Naive thymus-derived CD4-positive, alpha-beta T cell (primary cell): ENCODE measurements at regions of chr3 and their contacts with region 1.

Region 1: DNA sequence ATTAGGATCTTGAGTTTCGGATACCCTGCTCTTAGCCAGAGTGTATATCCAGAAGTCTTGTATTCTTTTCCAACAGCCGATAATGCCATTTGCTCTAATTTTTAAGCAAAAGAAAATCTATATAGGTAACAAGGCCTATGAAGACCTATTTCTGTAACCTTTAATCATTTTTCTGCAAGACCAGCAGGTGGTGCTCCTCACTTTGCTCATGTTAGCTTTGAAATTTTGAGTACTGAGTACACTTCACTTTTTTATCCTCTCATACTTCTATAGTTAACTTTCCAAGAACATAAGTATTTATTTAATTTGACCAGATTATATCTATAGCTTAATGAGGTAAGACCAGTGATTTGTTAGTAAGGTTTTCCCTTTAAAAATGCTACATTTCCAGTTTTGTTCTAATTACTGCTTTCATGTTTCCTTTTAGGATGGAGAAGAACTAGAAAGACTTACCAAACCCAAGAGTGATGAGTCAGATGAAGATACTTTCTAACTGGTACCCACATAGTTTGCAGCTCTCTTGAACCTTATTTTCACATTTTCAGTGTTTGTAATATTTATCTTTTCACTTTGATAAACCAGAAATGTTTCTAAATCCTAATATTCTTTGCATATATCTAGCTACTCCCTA is 20.5 kb downstream of the SLC35A5 start:
- DNase-seq: peak in 5 of 9 donors; percentile 8 to 39 (median 22)
- ATAC-seq: peak; percentile 60
- H3K4me3 ChIP-seq: no peak overlapping the region
- H3K4me3 Mint-ChIP-seq: no peak overlapping the region
- H3K27ac ChIP-seq: no peak overlapping the region
- H3K27ac Mint-ChIP-seq: no peak overlapping the region
- H3K4me1 ChIP-seq: no peaks in the 10 kb centered on the region
- H3K4me1 Mint-ChIP-seq: peaks cover 0 to 4% (median under 1%) of the 10 kb centered on the region in 7 donors
- H3K27me3 ChIP-seq: no peaks in the 10 kb centered on the region
- H3K27me3 Mint-ChIP-seq: no peaks in the 10 kb centered on the region

Region 2: DNA sequence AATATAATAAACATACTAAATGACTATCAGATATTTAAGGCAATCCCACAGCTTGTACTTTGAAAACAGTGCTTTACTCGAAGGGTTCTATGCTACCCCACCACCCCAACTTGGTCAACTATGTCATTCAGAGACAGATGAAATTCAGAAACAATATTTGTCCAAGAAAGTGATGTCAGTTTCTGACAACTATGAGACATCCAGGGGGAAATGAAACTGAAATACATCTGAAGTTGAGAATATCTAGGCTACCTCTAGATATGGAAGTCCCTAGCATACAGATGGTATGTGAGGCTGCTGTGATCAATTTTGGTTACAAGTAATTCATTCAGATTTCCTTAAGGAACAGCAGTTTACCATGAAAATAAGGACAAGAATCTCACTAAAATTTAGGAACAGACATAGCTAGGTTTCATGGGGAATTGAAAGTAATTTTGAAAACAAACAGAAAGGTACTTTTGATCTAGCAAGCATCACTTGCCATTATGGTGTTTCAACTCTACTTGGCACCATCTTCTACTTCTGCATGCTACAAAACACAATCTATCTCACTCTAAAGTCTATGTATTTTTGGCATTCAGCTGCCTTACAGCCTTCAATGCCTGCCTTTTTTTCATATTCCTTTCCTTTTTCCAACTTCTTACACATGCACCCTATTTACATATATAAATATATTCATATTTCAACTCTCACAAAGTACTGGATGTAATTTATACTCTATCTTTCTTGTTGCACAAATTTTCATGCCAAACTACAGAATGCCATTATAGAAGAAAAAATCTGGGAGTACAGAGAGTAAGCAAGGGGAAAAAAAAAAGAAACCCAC is 42.3 kb before region 1 on chr3:
- CTCF ChIA-PET with region 1: no interaction called
- POLR2A ChIA-PET with region 1: no interaction called
- intact Hi-C with region 1: no loop called
- DNase-seq: no peak
- ATAC-seq: no peak
- H3K4me3 ChIP-seq: no peak overlapping the region
- H3K4me3 Mint-ChIP-seq: no peak overlapping the region
- H3K27ac ChIP-seq: no peak overlapping the region
- H3K27ac Mint-ChIP-seq: peak overlapping the region in 4 of 9 donors; percentile 32 to 69 (median 52)
- H3K4me1 ChIP-seq: no peaks in the 10 kb centered on the region
- H3K4me1 Mint-ChIP-seq: peaks cover 2 to 22% (median 12%) of the 10 kb centered on the region in 7 donors
- H3K27me3 ChIP-seq: no peaks in the 10 kb centered on the region
- H3K27me3 Mint-ChIP-seq: no peaks in the 10 kb centered on the region

Region 3: GRCh38 chr3:112814266-112814665 is 231.9 kb after region 1 on chr3:
- CTCF ChIA-PET with region 1: no interaction called
- POLR2A ChIA-PET with region 1: no interaction called
- intact Hi-C with region 1: loop called (anchors 1 kb)
- DNase-seq: no peak
- ATAC-seq: no peak
- H3K4me3 ChIP-seq: no peak overlapping the region
- H3K4me3 Mint-ChIP-seq: no peak overlapping the region
- H3K27ac ChIP-seq: no peak overlapping the region
- H3K27ac Mint-ChIP-seq: no peak overlapping the region
- H3K4me1 ChIP-seq: no peaks in the 10 kb centered on the region
- H3K4me1 Mint-ChIP-seq: peaks cover 18 to 28% (median 23%) of the 10 kb centered on the region in 7 donors
- H3K27me3 ChIP-seq: no peaks in the 10 kb centered on the region
- H3K27me3 Mint-ChIP-seq: peaks cover 0 to 3% (median 0%) of the 10 kb centered on the region in 5 donors

Region 4: GRCh38 chr3:113287803-113288648 is 705.7 kb after region 1 on chr3:
- CTCF ChIA-PET with region 1: interaction called, 4 read pairs
- POLR2A ChIA-PET with region 1: interaction called, 3 read pairs
- intact Hi-C with region 1: loop called (anchors 1 to 2 kb)
- DNase-seq: peak in 6 of 9 donors; percentile 9 to 57 (median 40)
- ATAC-seq: peak; percentile 60
- H3K4me3 ChIP-seq: no peak overlapping the region
- H3K4me3 Mint-ChIP-seq: no peak overlapping the region
- H3K27ac ChIP-seq: no peak overlapping the region
- H3K27ac Mint-ChIP-seq: no peak overlapping the region
- H3K4me1 ChIP-seq: no peaks in the 10 kb centered on the region
- H3K4me1 Mint-ChIP-seq: peaks cover 0 to 4% (median 0%) of the 10 kb centered on the region in 7 donors
- H3K27me3 ChIP-seq: no peaks in the 10 kb centered on the region
- H3K27me3 Mint-ChIP-seq: no peaks in the 10 kb centered on the region